ENCODE measurements at regions of chr3 and their contacts with region 1.

Region 1: DNA sequence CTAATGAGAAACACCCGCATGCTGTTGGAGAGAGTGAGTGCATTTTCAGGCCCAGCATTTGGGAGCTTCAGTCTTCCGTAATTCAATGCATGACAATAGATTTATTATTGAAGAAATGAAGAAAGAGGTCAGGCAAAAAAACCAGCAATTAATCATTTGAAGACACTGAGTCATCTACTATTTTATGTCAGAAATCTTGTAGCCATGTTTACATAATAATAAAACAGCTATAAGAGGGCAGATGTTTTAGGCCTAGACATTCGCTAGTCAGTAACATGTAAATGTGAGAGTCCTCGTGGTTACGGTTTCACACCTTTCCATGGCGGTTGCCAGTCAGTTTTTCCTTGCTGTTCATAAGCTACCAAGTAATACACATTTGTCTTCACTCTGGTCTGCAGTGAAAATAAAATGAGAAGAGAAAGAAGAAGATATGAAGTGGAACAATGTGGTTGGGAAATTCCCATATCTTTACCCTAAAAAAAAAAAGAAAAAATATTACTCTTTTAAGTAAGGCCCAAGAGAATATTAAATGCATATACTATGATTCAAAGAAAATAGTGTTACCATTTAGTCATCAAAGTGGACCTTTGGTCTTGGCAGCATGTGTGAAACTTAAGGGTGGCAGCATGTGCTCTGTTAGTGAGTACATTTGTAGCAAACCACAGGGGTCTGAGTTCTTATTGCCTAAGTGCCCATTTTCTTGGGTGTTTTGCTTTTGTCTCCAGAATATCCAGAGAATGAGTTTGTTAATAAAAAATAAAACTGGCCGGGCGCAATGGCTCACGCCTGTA is 140.5 kb upstream of the TBL1XR1 start:
- DNase-seq: peak in 2 of 9 donors; percentile 15 to 76
- ATAC-seq: peak; percentile 58
- H3K4me3 ChIP-seq: no peak overlapping the region
- H3K4me3 Mint-ChIP-seq: peak overlapping the region in 1 of 10 donors; percentile 42
- H3K27ac ChIP-seq: no peak overlapping the region
- H3K27ac Mint-ChIP-seq: peak overlapping the region in 2 of 9 donors; percentile 6 to 72
- H3K4me1 ChIP-seq: peaks cover 5 to 17% of the 10 kb centered on the region in 2 donors
- H3K4me1 Mint-ChIP-seq: peaks cover 15 to 42% (median 21%) of the 10 kb centered on the region in 7 donors
- H3K27me3 ChIP-seq: no peaks in the 10 kb centered on the region
- H3K27me3 Mint-ChIP-seq: no peaks in the 10 kb centered on the region

Region 2: GRCh38 chr3:177320765-177321247 is 16.9 kb before region 1 on chr3:
- CTCF ChIA-PET with region 1: no interaction called
- POLR2A ChIA-PET with region 1: no interaction called
- intact Hi-C with region 1: loop called in 1 of 2 experiments (anchors 2 kb)
- DNase-seq: peak in 7 of 9 donors; percentile 18 to 61 (median 52)
- ATAC-seq: no peak
- H3K4me3 ChIP-seq: no peak overlapping the region
- H3K4me3 Mint-ChIP-seq: peak overlapping the region; percentile 4 to 75 (median 60)
- H3K27ac ChIP-seq: no peak overlapping the region
- H3K27ac Mint-ChIP-seq: peak overlapping the region; percentile 11 to 90 (median 74)
- H3K4me1 ChIP-seq: peaks cover 0 to 14% of the 10 kb centered on the region in 2 donors
- H3K4me1 Mint-ChIP-seq: peaks cover 17 to 47% (median 38%) of the 10 kb centered on the region in 7 donors
- H3K27me3 ChIP-seq: no peaks in the 10 kb centered on the region
- H3K27me3 Mint-ChIP-seq: no peaks in the 10 kb centered on the region

Measured in naive thymus-derived CD4-positive, alpha-beta T cell (primary cell).